ENCODE measurements at regions of chrX and their contacts with region 1.

Region 1: GRCh38 chrX:82723806-82724205 is 784.3 kb upstream of the POU3F4 start:
- DNase-seq: no peak
- ATAC-seq: no peak
- H3K4me3 ChIP-seq: no peak overlapping the region
- H3K27ac ChIP-seq: no peak overlapping the region
- H3K4me1 ChIP-seq: no peaks in the 10 kb centered on the region
- H3K27me3 ChIP-seq: no peaks in the 10 kb centered on the region
- CTCF ChIP-seq: no peak
- EP300 ChIP-seq: no peak
- POLR2A ChIP-seq: no peak
- RAD21 ChIP-seq: no peak

Region 2: DNA sequence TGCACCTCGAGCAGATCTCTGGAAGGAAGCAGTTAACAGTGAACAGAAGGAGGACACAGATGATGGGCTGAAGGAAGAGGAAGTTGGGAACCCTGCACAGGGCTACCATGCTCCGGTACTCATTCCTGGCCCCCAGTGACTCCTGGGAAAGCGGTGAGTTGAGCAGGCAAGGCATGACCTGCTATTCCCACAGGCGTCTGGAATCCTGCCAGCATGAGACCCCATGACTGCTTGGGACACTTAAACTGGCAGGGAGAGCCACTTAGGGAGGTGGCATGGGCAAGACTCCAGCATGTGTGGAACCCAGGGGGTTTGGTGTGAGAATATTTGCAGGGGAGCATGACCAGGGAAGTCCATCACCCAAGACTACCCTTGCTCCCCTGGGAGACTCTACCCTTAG is 272.1 kb before region 1 on chrX:
- CTCF ChIA-PET with region 1: no interaction called
- POLR2A ChIA-PET with region 1: no interaction called
- RAD21 ChIA-PET with region 1: no interaction called
- SMC1A ChIA-PET with region 1: no interaction called
- in situ Hi-C with region 1: no loop called
- intact Hi-C with region 1: no loop called
- DNase-seq: no peak
- ATAC-seq: no peak
- H3K4me3 ChIP-seq: no peak overlapping the region
- H3K27ac ChIP-seq: no peak overlapping the region
- H3K4me1 ChIP-seq: no peaks in the 10 kb centered on the region
- H3K27me3 ChIP-seq: no peaks in the 10 kb centered on the region
- CTCF ChIP-seq: no peak
- EP300 ChIP-seq: no peak
- POLR2A ChIP-seq: no peak
- RAD21 ChIP-seq: no peak

Region 3: DNA sequence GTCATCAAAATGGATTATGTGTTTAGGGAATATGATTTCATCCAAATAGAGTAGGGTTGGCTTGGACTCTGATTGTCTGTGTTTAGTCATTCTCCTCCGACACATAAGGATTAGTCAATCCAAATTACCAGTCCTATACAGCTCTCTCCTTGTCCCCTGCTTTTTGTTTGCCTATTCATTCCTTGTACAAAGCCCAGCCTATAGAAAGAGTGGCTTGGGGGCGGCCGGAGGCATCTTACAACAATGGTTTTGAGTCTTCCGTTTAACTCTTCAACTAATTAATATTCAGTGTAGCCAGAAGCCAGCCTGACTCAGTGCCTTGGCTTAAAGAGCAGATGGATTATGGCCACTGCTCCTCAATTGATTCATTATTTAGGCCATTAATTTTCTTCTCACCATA is 12.3 kb before region 1 on chrX:
- CTCF ChIA-PET with region 1: interaction called, 4 read pairs
- POLR2A ChIA-PET with region 1: interaction called, 3 read pairs
- RAD21 ChIA-PET with region 1: interaction called, 4 read pairs
- SMC1A ChIA-PET with region 1: interaction called, 11 read pairs
- in situ Hi-C with region 1: no loop called
- intact Hi-C with region 1: no loop called
- DNase-seq: no peak
- ATAC-seq: no peak
- H3K4me3 ChIP-seq: no peak overlapping the region
- H3K27ac ChIP-seq: no peak overlapping the region
- H3K4me1 ChIP-seq: no peaks in the 10 kb centered on the region
- H3K27me3 ChIP-seq: no peaks in the 10 kb centered on the region
- CTCF ChIP-seq: no peak
- EP300 ChIP-seq: no peak
- POLR2A ChIP-seq: no peak
- RAD21 ChIP-seq: no peak

Region 4: DNA sequence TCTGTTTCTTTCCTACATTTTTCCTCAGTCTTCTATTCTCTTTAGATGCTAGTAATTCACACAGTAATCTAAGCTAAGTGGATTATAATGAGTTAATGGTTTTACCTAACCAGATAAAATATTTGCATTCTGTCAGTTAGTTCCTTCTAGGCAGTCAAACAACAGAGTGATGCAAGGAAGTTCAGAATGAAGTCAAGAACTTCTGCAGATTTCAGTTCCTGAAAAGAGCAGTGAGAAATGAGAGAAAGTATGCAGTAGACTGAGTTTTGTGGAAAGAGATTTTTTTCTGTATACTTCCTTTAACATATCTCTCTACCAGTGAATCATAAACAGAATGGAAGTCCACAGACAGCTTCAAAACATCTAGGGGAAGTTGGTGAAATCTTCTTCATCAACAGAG is 10.3 kb after region 1 on chrX:
- CTCF ChIA-PET with region 1: interaction called, 5 read pairs
- POLR2A ChIA-PET with region 1: no interaction called
- RAD21 ChIA-PET with region 1: interaction called, 3 read pairs
- SMC1A ChIA-PET with region 1: interaction called, 19 read pairs
- in situ Hi-C with region 1: no loop called
- intact Hi-C with region 1: loop called (anchors 2 kb)
- DNase-seq: no peak
- ATAC-seq: peak; percentile 81
- H3K4me3 ChIP-seq: no peak overlapping the region
- H3K27ac ChIP-seq: no peak overlapping the region
- H3K4me1 ChIP-seq: no peaks in the 10 kb centered on the region
- H3K27me3 ChIP-seq: no peaks in the 10 kb centered on the region
- CTCF ChIP-seq: no peak
- EP300 ChIP-seq: no peak
- POLR2A ChIP-seq: no peak
- RAD21 ChIP-seq: no peak